Activated naive CD4-positive, alpha-beta T cell treated with anti-CD3 and anti-CD28 coated beads for 36 hours (primary cell): ENCODE measurements at regions of chr20 and their contacts with region 1.

Region 1: GRCh38 chr20:33515569-33516216 is 25.8 kb downstream of the CBFA2T2 start:
- DNase-seq: peak; percentile 11
- H3K4me3 Mint-ChIP-seq: no peak overlapping the region
- H3K27ac Mint-ChIP-seq: no peak overlapping the region
- H3K4me1 Mint-ChIP-seq: peaks cover 15% of the 10 kb centered on the region
- H3K27me3 Mint-ChIP-seq: no peaks in the 10 kb centered on the region

Region 2: DNA sequence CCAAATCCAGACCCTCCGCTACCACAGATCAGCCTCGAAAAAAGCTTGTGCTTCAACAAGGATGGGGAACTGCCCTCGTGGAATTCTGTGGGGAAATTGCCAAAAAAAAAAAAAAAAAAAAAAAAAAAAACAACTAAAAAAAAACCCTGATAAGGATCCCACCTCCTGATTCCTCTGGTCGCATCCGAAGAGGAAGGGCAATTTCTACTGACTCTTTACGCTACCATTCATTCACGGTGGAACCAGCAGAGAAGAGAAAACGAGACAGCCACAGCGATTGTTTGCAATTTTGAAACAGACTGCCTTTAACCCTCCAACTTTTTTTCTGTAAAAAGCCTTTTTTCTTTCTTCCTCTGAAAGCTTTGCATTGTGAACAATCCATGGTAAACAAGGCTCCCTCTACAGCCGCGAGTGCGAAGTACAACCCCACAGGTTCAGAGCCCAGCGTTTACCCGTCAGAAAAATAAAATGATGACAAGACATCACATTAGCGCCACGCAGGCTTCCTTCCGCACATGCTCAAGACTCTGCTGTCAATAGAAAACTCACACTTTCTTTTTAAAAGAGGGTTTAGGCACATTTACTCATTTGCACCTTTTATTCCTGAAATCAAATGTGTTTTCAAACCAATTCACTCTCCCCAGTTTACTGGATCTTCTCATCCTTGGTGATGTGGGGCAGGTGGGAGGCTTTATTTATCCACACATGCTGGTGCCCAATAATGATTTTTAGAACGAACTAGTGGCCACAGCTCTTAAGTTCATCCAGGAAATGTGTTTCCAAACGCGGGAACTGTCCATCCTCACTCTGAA is 1030.5 kb before region 1 on chr20:
- CTCF ChIA-PET with region 1: no interaction called
- intact Hi-C with region 1: no loop called
- DNase-seq: peak; percentile 95
- H3K4me3 Mint-ChIP-seq: peak overlapping the region; percentile 84
- H3K27ac Mint-ChIP-seq: peak overlapping the region; percentile 93
- H3K4me1 Mint-ChIP-seq: peaks cover 39% of the 10 kb centered on the region
- H3K27me3 Mint-ChIP-seq: no peaks in the 10 kb centered on the region

Region 3: DNA sequence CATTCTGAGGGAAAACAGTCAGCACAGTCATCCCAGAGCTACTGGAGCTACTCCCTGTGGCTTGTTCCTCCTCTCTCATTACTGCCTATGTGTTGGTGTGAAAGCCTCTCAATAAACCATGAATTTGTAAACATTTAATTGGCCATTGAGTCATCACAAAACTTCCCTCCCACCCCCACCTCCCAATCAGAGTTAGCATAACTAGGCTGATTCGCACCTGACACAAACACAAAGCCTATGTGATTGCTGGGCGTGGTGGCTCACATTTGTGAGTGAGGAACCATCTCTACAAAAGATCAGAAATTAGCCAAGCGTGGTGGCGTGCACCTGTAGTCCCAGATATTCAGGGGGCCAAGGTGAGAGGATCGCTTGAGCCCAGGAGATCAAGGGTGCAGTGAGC is 55.0 kb before region 1 on chr20:
- CTCF ChIA-PET with region 1: no interaction called
- intact Hi-C with region 1: loop called (anchors 5 kb)
- DNase-seq: peak; percentile 9
- H3K4me3 Mint-ChIP-seq: no peak overlapping the region
- H3K27ac Mint-ChIP-seq: no peak overlapping the region
- H3K4me1 Mint-ChIP-seq: no peaks in the 10 kb centered on the region
- H3K27me3 Mint-ChIP-seq: no peaks in the 10 kb centered on the region

Region 4: DNA sequence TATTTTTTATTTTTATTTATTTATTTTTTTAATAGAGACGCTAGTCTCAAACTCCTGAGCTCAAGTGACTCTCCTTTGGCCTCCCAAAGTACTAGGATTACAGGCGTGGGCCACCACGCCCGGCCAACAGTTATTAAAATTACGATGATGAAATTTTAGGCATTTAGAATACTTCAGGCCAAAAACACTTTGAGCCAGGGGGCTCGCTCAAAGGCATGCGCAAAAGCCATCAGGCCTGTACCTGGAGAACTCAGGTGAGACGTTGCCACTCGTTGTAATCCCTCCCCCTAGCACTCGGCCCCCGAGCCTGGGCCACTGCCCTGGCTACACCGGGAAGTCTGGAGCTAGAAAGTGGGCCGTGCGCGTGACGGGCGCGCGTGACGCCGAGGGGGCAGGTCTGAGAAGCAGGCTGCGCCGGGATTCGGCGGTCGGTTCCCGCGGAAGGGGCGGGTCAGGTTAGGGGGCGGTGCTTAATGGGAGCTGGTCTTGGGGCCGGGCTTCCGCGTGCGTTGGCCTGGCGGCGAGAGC is 26.1 kb before region 1 on chr20:
- CTCF ChIA-PET with region 1: no interaction called
- intact Hi-C with region 1: no loop called
- DNase-seq: peak; percentile 100
- H3K4me3 Mint-ChIP-seq: peak overlapping the region; percentile 79
- H3K27ac Mint-ChIP-seq: peak overlapping the region; percentile 81
- H3K4me1 Mint-ChIP-seq: peaks cover 17% of the 10 kb centered on the region
- H3K27me3 Mint-ChIP-seq: no peaks in the 10 kb centered on the region

Region 5: GRCh38 chr20:33576432-33577125 is 60.9 kb after region 1 on chr20:
- CTCF ChIA-PET with region 1: no interaction called
- intact Hi-C with region 1: no loop called
- DNase-seq: no peak
- H3K4me3 Mint-ChIP-seq: no peak overlapping the region
- H3K27ac Mint-ChIP-seq: no peak overlapping the region
- H3K4me1 Mint-ChIP-seq: peaks cover 13% of the 10 kb centered on the region
- H3K27me3 Mint-ChIP-seq: no peaks in the 10 kb centered on the region